ENCODE measurements at regions of chr2 and their contacts with region 1.

Region 1: DNA sequence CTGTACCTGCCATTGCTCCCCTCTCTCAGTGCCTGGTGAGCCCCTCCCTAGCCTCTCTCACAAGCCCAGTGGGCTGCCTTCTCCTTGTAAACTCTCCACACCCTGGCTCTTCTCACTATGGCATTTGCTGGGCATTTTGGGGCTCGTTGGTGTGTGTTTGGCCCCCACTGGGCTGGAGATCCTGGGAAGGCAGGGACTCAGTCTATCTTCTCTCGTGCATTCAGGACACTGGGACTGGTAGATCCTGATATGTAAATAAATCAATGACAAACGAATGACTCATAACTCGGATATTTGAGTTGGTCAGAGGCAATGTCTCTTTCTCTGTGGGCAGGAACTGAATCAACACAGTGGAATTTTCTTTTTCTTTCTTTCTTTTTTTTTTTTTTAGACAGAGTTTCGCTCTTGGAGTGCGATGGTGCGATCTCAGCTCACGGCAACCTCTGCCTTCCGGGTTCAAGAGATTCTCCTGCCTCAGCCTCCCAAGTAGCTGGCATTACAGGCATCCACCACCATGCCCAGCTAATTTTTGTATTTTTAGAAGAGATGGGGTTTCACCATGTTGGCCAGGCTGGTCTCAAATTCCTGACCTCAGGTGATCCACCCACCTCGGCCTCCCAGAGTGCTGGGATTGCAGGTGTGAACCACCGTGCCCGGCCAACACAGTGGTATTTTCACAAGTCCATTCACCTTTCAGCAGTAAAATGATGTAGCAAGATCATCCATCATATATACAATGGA is 144.6 kb upstream of the SPRED2 start:
- DNase-seq: peak; percentile 96
- ATAC-seq: peak; percentile 92
- H3K4me3 ChIP-seq: peak overlapping the region; percentile 43; the same call in 1 of the 2 replicates
- H3K27ac ChIP-seq: peak overlapping the region; percentile 91
- H3K4me1 ChIP-seq: peaks cover 17% of the 10 kb centered on the region
- H3K27me3 ChIP-seq: no peaks in the 10 kb centered on the region
- CTCF ChIP-seq: no peak

Region 2: GRCh38 chr2:64914735-64915509 is 662.1 kb before region 1 on chr2:
- CTCF ChIA-PET with region 1: no interaction called
- POLR2A ChIA-PET with region 1: no interaction called
- intact Hi-C with region 1: loop called (anchors 2 kb)
- DNase-seq: no peak
- ATAC-seq: no peak
- H3K4me3 ChIP-seq: no peak overlapping the region
- H3K27ac ChIP-seq: no peak overlapping the region
- H3K4me1 ChIP-seq: no peaks in the 10 kb centered on the region; the same call in 1 of the 2 replicates
- H3K27me3 ChIP-seq: no peaks in the 10 kb centered on the region
- CTCF ChIP-seq: no peak

Region 3: GRCh38 chr2:65186872-65187851 is 389.9 kb before region 1 on chr2:
- CTCF ChIA-PET with region 1: no interaction called
- POLR2A ChIA-PET with region 1: no interaction called
- intact Hi-C with region 1: loop called (anchors 10 kb)
- DNase-seq: peak; percentile 90
- ATAC-seq: peak; percentile 81
- H3K4me3 ChIP-seq: peak overlapping the region; percentile 29; the same call in 1 of the 2 replicates
- H3K27ac ChIP-seq: peak overlapping the region; percentile 49
- H3K4me1 ChIP-seq: peaks cover 18% of the 10 kb centered on the region
- H3K27me3 ChIP-seq: no peaks in the 10 kb centered on the region
- CTCF ChIP-seq: peak; percentile 91

Region 4: GRCh38 chr2:65264821-65265670 is 312.0 kb before region 1 on chr2:
- CTCF ChIA-PET with region 1: interaction called, 6 read pairs
- POLR2A ChIA-PET with region 1: no interaction called
- intact Hi-C with region 1: loop called (anchors 1 kb)
- DNase-seq: peak; percentile 74
- ATAC-seq: peak; percentile 70
- H3K4me3 ChIP-seq: no peak overlapping the region
- H3K27ac ChIP-seq: no peak overlapping the region
- H3K4me1 ChIP-seq: peaks cover 19% of the 10 kb centered on the region; the same call in 1 of the 2 replicates
- H3K27me3 ChIP-seq: no peaks in the 10 kb centered on the region
- CTCF ChIP-seq: peak; percentile 88

Region 5: DNA sequence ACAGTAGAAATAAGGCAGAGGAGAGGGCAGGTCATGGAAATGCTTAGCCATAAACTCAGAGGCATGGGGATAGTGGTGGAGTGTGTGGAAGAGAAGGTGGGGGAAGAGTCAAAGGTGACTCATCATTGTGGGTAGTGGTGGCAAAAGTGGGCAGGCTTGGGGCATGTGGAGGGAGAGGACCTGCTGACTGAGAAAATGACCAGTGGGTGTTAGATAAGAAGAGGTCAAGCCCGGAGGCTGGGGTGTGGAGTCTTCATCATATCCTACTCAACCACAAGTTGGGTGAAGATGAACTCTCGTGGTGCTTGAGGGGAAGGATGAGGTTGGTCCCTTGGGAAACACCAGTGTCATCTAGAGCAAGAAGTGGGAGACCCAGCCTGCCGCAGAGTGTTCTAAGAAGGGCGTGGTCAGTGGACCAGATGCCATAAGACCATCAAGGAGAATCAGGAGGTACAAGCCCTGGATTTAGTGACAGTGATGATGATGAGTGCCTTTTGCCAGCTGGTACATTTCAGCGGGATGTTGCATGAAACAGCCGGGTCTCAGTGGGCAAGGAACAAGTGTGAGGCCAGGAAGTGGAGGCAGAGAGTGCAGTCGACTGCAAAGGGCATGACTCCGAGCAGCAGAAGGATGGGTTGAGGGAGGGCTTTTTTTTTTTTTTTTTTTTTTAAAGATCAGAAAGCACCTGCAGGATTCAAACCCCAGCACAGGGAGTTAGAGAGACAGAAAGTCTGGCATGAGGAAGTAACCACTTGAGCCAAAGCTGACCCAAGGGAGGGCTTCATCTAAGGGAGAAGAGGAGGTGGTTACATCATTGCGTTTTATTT is 22.1 kb before region 1 on chr2:
- CTCF ChIA-PET with region 1: no interaction called
- POLR2A ChIA-PET with region 1: no interaction called
- intact Hi-C with region 1: loop called (anchors 1 kb)
- DNase-seq: peak; percentile 39
- ATAC-seq: peak; percentile 45
- H3K4me3 ChIP-seq: no peak overlapping the region
- H3K27ac ChIP-seq: no peak overlapping the region
- H3K4me1 ChIP-seq: peaks cover 5% of the 10 kb centered on the region
- H3K27me3 ChIP-seq: no peaks in the 10 kb centered on the region
- CTCF ChIP-seq: no peak

Region 6: DNA sequence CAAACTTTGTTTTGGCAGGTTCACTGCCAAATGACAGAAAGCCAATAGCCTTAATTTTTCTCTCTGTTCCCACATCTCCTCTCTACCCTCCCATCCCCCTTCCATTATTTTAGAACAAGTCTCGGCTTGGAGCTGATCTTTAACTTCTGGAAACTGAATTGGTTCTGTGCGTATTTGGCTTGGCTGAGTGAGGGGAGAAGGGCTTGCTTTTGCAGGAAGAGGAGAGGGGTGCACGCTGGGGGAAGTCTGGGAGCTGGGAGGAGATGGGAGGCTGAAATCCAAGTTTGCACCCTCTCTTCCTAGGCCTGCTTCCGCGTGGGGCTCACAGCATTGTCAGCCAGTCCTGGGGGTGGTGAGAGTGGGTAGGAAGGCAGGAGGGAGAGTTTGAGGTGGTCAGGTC is 31.4 kb after region 1 on chr2:
- CTCF ChIA-PET with region 1: no interaction called
- POLR2A ChIA-PET with region 1: interaction called, 7 read pairs
- intact Hi-C with region 1: loop called (anchors 1 kb)
- DNase-seq: no peak
- ATAC-seq: no peak
- H3K4me3 ChIP-seq: no peak overlapping the region
- H3K27ac ChIP-seq: no peak overlapping the region
- H3K4me1 ChIP-seq: peaks cover 27% of the 10 kb centered on the region
- H3K27me3 ChIP-seq: no peaks in the 10 kb centered on the region
- CTCF ChIP-seq: no peak

Region 7: DNA sequence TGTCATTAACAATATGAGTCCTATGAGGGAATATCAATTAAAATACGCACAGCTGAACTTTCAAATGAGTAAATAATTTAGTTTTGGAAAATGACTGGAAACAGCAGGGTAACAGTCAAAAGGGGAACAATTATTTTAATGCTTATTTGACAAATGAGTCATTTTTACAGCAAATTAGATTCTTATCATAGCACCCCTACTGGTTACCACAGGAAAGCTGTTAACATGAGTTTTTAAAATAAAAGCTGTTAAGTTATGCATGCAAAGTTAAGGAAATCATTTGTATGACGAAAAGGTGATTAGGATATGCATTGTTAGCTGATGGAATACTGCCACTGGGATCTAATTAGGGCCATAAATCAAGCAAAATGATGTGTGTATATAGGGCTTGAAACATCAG is 422.8 kb after region 1 on chr2:
- CTCF ChIA-PET with region 1: no interaction called
- POLR2A ChIA-PET with region 1: no interaction called
- intact Hi-C with region 1: no loop called
- DNase-seq: peak; percentile 21
- ATAC-seq: no peak
- H3K4me3 ChIP-seq: no peak overlapping the region
- H3K27ac ChIP-seq: no peak overlapping the region
- H3K4me1 ChIP-seq: no peaks in the 10 kb centered on the region
- H3K27me3 ChIP-seq: peaks cover 19% of the 10 kb centered on the region; the same call in 1 of the 2 replicates
- CTCF ChIP-seq: peak; percentile 53; the same call in 1 of the 2 replicates

Measured in PC-3 (cell line).